Activated naive CD4-positive, alpha-beta T cell treated with anti-CD3 and anti-CD28 coated beads for 36 hours (primary cell): ENCODE measurements at regions of chr5 and their contacts with region 1.

Region 1: DNA sequence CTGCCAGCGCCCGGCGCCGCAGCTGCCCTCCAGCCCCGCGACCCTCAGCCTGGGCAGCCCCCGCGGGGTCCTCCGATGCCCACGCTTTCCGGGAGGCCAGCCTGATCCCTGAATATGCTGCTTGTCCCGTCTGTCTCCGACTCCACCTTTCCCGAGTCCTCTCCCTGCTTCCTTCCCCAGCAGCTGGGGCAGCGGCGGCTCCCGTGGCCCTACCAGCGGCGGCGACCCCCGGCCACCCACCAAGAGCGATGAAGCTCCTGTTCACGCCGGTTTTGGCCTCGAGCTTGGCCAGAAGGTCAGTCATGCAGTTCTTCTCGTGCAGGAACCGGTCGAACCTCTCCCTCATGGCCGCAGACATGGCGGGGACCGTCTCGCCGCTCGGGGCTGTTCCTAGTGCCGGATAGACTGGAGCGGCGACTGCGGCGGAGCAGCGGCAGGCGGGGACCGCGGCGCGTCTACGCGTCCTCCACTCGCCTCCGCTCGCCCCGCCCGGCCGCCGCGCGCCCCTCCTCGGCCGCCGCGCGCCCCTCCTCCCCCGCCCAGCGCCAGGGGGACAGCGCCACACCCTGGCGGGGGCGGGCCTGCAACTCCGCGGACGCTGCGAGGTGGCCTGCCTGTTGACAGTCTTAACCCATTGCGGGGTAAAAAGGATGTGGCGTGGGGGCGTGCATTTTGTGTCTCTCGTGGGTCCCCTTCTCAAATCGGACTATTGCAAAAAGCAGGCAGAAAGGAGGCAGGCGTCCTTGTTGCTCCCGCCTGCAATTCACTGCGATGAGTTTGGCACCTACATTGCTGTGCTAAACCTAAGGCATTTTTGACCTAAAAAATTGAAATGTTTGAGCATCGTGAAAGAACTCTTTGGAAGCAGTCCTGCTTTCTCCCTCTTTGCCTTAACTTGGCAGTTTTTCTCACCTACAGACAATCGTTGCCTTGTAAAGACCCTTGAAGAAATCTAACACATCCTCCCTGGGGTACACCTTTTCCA is at the start of gene REEP5:
- DNase-seq: peak; percentile 76
- H3K4me3 Mint-ChIP-seq: peak within 1 kb of the TSS; percentile 90
- H3K27ac Mint-ChIP-seq: peak within 1 kb of the TSS; percentile 81
- H3K4me1 Mint-ChIP-seq: peaks cover 45% of the 10 kb centered on the region
- H3K27me3 Mint-ChIP-seq: no peaks in the 10 kb centered on the region
- total RNA-seq, gene REEP5: 18.3 to 18.8 TPM

Region 2: DNA sequence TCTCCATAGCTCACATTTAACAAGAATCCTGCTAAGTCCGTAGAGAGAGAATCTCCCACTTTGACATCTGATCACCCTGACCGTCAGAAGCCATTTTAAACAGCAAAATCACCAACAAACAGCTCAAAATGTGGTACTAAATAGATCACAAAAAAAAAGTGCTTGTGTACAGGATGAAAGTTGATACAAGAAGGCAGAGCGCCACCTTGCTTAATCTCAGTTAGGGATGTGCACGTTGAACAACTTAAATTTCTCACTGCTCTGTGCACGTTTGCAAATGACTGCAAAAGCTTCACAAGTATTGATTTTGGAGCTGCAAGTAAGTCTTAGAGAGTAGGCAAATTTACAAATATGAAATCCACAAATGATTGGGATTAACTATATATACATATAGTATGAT is 1102.1 kb before region 1 on chr5:
- CTCF ChIA-PET with region 1: no interaction called
- intact Hi-C with region 1: no loop called
- DNase-seq: no peak
- H3K4me3 Mint-ChIP-seq: no peak overlapping the region
- H3K27ac Mint-ChIP-seq: no peak overlapping the region
- H3K4me1 Mint-ChIP-seq: no peaks in the 10 kb centered on the region
- H3K27me3 Mint-ChIP-seq: peaks cover 2% of the 10 kb centered on the region

Region 3: GRCh38 chr5:112551419-112552032 is 370.6 kb before region 1 on chr5:
- CTCF ChIA-PET with region 1: no interaction called
- intact Hi-C with region 1: loop called (anchors 1 kb)
- DNase-seq: peak; percentile 45
- H3K4me3 Mint-ChIP-seq: no peak overlapping the region
- H3K27ac Mint-ChIP-seq: no peak overlapping the region
- H3K4me1 Mint-ChIP-seq: no peaks in the 10 kb centered on the region
- H3K27me3 Mint-ChIP-seq: no peaks in the 10 kb centered on the region

Region 4: GRCh38 chr5:112757468-112758208 is 164.5 kb before region 1 on chr5:
- CTCF ChIA-PET with region 1: interaction called, 3 read pairs
- intact Hi-C with region 1: loop called (anchors 5 kb)
- DNase-seq: no peak
- H3K4me3 Mint-ChIP-seq: no peak overlapping the region
- H3K27ac Mint-ChIP-seq: no peak overlapping the region
- H3K4me1 Mint-ChIP-seq: peaks cover 2% of the 10 kb centered on the region
- H3K27me3 Mint-ChIP-seq: no peaks in the 10 kb centered on the region

Region 5: GRCh38 chr5:112860929-112861637 is 61.0 kb before region 1 on chr5 and contains the start of gene SRP19:
- CTCF ChIA-PET with region 1: interaction called, 3 read pairs
- intact Hi-C with region 1: loop called (anchors 1 kb)
- DNase-seq: peak; percentile 96
- H3K4me3 Mint-ChIP-seq: peak within 1 kb of the TSS; percentile 96
- H3K27ac Mint-ChIP-seq: peak within 1 kb of the TSS; percentile 95
- H3K4me1 Mint-ChIP-seq: peaks cover 30% of the 10 kb centered on the region
- H3K27me3 Mint-ChIP-seq: peaks cover 9% of the 10 kb centered on the region
- total RNA-seq, gene SRP19: 43.7 to 49.6 TPM

Region 6: DNA sequence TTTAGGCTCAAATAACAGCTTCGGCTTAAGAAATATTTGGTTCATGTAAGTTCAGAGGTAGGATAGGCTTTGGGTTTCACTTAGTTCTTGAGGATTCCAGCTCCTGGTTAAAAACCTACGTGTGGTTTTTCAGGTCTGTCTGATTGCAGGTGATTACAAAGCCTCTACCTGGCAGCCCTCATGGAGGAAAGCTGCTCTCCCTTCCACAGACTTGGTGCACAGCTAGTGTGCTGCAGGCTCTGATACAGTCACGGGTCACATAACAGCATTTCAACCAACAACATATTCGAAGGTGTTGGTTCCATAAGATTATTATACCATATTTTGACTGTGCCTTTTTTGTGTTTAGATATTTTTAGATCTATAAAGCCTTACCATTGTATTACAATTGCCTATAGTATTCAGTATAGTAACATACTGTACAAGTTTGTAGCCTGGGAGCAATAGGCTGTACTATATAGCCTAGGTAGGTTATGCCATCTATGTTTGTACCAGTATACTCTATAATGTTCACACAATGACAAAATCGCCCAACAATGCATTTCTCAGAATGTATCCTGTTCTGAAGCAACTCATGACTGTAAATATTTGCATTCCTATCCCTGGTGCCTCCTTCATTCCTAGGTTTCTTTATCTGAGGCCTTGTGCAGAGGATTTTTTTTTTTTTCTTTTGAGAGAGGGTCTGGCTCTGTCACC is 46.4 kb after region 1 on chr5:
- CTCF ChIA-PET with region 1: interaction called, 27 read pairs
- intact Hi-C with region 1: loop called (anchors 1 kb)
- DNase-seq: no peak
- H3K4me3 Mint-ChIP-seq: no peak overlapping the region
- H3K27ac Mint-ChIP-seq: no peak overlapping the region
- H3K4me1 Mint-ChIP-seq: peaks cover 18% of the 10 kb centered on the region
- H3K27me3 Mint-ChIP-seq: no peaks in the 10 kb centered on the region